Thyroid gland (tissue), 4 donors: ENCODE measurements at regions of chr18 and their contacts with region 1.

Region 1: DNA sequence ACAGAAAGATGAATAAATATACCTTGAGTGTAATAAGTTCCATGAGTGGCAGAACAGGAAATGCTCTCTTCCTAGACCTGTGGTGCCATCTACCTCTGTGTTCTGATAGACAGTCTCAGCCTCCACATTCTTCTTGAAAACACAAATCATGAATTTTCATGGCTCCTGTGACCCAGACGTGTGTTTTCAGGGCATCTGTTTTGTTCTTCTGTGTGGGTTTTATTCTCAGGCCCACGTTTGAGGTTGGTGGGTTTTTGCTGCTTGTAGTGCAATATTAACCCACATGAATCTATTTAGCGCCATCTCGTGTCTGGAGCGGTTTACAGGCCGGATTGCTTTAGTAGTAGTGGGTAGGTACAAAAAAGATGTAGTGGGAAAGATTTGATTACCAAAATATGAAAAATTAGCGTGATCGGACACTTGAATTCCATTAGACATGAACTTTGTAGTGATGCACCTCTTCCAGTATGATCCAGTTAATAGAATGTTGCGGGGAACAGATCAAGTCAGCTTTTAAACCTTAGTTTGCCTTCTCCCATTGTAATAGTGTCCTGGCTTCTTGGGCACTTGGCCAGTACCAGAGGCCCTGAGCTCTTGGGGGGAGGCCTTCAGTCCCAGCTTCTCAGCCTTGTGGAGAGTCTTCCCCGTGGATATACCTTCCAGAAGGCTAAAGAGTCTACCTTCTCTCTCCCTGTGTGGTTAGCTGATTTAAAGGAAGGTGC is 256.5 kb downstream of the TPGS2 start:
- DNase-seq: peak; percentile 63 to 66
- H3K4me3 ChIP-seq: no peak overlapping the region
- H3K27ac ChIP-seq: no peak overlapping the region
- H3K4me1 ChIP-seq: no peaks in the 10 kb centered on the region
- H3K27me3 ChIP-seq: no peaks in the 10 kb centered on the region
- CTCF ChIP-seq: peak in 5 of 6 experiments; percentile 13 to 81 (median 64)
- POLR2A ChIP-seq: no peak

Region 2: GRCh38 chr18:36035253-36035652 is 537.0 kb before region 1 on chr18:
- intact Hi-C with region 1: no loop called
- DNase-seq: no peak
- H3K4me3 ChIP-seq: no peak overlapping the region
- H3K27ac ChIP-seq: no peak overlapping the region
- H3K4me1 ChIP-seq: peaks cover 0 to 6% of the 10 kb centered on the region in 2 donors
- H3K27me3 ChIP-seq: no peaks in the 10 kb centered on the region
- CTCF ChIP-seq: no peak
- POLR2A ChIP-seq: no peak

Region 3: DNA sequence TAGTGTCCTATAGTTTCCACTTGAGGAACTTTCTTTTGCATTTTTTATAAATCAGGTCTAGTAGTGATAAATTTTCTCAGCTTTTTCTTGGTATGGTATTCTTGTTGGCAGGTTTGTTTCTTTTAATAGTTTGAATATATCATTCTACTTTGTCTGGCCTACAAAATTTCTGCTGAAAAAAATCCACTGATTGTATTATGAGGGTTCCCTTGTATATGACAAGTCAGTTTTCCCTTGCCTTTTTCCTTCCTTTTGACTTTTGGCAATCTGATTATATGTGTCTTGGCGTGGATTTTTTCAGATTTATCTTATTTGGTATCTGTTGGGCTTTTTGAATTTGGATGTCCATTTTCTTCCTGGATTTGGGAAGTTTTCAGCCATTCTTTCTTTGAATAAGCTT is 343.1 kb before region 1 on chr18:
- intact Hi-C with region 1: no loop called
- DNase-seq: no peak
- H3K4me3 ChIP-seq: no peak overlapping the region
- H3K27ac ChIP-seq: no peak overlapping the region
- H3K4me1 ChIP-seq: no peaks in the 10 kb centered on the region
- H3K27me3 ChIP-seq: no peaks in the 10 kb centered on the region
- CTCF ChIP-seq: no peak
- POLR2A ChIP-seq: no peak

Region 4: GRCh38 chr18:36296650-36297416 is 275.5 kb before region 1 on chr18:
- intact Hi-C with region 1: loop called (anchors 5 kb)
- DNase-seq: peak; percentile 71 to 77
- H3K4me3 ChIP-seq: peak overlapping the region; percentile 3 to 56 (median 27)
- H3K27ac ChIP-seq: peak overlapping the region in 2 of 3 donors; percentile 10 to 71
- H3K4me1 ChIP-seq: peaks cover 0 to 4% of the 10 kb centered on the region in 2 donors
- H3K27me3 ChIP-seq: no peaks in the 10 kb centered on the region
- CTCF ChIP-seq: peak in 4 of 6 experiments; percentile 8 to 50 (median 40)
- POLR2A ChIP-seq: no peak

Region 5: GRCh38 chr18:36633961-36634412 is 61.7 kb after region 1 on chr18:
- intact Hi-C with region 1: no loop called
- DNase-seq: no peak
- H3K4me3 ChIP-seq: no peak overlapping the region
- H3K27ac ChIP-seq: no peak overlapping the region
- H3K4me1 ChIP-seq: peaks cover 0 to 8% of the 10 kb centered on the region in 2 donors
- H3K27me3 ChIP-seq: no peaks in the 10 kb centered on the region
- CTCF ChIP-seq: no peak
- POLR2A ChIP-seq: no peak